Activated CD4-positive, alpha-beta memory T cell treated with anti-CD3 and anti-CD28 coated beads for 36 hours (primary cell): ENCODE measurements at regions of chr11 and their contacts with region 1.

Region 1: GRCh38 chr11:9003573-9004309 is at the start of gene NRIP3:
- DNase-seq: peak; percentile 74
- H3K4me3 Mint-ChIP-seq: peak within 1 kb of the TSS; percentile 70
- H3K27ac Mint-ChIP-seq: no peak within 1 kb of the TSS
- H3K4me1 Mint-ChIP-seq: peaks cover 27% of the 10 kb centered on the region
- H3K27me3 Mint-ChIP-seq: peaks cover 36% of the 10 kb centered on the region
- total RNA-seq, gene NRIP3: 2.7 to 2.9 TPM

Region 2: DNA sequence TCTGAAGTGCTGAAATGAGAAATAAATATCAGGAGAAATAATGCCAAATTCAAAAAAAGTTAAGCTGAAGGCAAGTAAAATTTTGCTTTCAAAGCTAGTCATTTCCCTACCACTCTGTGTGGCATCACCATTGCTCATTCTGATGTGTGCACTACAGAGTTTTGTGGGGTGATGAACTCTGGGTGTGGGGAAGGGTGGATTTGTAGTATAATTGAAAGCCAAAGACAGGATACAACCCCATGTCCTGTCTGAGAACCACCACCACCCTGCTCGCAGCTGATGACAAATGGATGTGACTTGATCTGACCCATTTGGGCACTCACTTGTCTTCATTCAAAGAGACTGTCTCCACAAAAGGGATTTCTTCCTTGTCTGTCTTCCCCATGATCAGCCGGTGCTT is 20.2 kb before region 1 on chr11:
- CTCF ChIA-PET with region 1: no interaction called
- POLR2A ChIA-PET with region 1: no interaction called
- intact Hi-C with region 1: loop called (anchors 2 kb)
- DNase-seq: peak; percentile 53
- H3K4me3 Mint-ChIP-seq: no peak overlapping the region
- H3K27ac Mint-ChIP-seq: no peak overlapping the region
- H3K4me1 Mint-ChIP-seq: peaks cover 3% of the 10 kb centered on the region
- H3K27me3 Mint-ChIP-seq: no peaks in the 10 kb centered on the region

Region 3: GRCh38 chr11:9060700-9061111 is 57.0 kb after region 1 on chr11:
- CTCF ChIA-PET with region 1: interaction called, 3 read pairs
- POLR2A ChIA-PET with region 1: no interaction called
- intact Hi-C with region 1: loop called (anchors 1 kb)
- DNase-seq: peak; percentile 88
- H3K4me3 Mint-ChIP-seq: no peak overlapping the region
- H3K27ac Mint-ChIP-seq: no peak overlapping the region
- H3K4me1 Mint-ChIP-seq: peaks cover 12% of the 10 kb centered on the region
- H3K27me3 Mint-ChIP-seq: peaks cover 35% of the 10 kb centered on the region

Region 4: DNA sequence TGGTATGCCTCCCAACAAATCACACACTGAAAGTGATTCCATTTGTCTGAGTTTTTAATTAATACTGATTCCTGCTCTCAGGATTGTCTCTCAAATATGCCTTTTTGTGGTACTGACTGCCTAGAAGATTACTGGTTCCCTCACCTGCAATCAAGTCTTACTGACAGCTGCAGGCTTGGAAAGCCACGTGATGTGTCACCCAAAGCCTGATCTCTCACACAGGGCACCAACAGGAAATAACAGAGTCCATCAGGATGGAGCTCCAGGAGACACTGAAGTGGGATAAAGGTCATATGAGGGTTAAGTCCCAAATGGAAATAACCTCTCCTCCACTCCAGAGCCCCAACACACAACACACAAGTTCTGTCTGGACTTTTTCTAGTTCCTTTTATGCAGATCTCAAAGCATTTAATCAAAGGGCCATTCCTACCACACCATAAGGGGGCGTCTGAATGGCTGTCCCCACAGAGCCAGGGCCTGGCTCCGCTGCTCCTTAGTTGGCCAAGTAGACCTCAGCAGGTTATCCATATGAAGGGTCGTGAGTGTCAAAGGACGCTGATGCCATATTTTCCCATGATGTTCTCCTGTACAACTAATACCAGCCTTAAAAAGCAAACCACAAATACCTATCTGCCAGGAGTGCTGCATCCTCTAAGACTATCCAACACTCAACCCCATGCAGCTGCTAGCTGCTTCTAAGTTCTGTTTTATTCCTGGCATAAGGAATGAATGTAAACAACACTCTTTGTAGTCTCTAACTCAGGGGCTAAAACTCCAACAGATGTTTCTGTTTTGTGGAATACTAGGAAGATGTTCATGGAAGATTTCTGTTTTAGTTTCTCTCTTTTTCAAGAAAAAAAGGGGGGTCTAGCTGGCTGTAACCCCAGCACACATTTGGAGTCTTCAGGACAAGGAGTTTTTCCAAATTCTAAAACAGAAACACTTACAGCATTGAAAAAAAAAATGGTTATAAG is 74.7 kb after region 1 on chr11:
- CTCF ChIA-PET with region 1: no interaction called
- POLR2A ChIA-PET with region 1: no interaction called
- intact Hi-C with region 1: no loop called
- DNase-seq: no peak
- H3K4me3 Mint-ChIP-seq: no peak overlapping the region
- H3K27ac Mint-ChIP-seq: no peak overlapping the region
- H3K4me1 Mint-ChIP-seq: peaks cover 3% of the 10 kb centered on the region
- H3K27me3 Mint-ChIP-seq: peaks cover 13% of the 10 kb centered on the region